Mammary epithelial cell (primary cell): ENCODE measurements at regions of chr11 and their contacts with region 1.

Region 1: DNA sequence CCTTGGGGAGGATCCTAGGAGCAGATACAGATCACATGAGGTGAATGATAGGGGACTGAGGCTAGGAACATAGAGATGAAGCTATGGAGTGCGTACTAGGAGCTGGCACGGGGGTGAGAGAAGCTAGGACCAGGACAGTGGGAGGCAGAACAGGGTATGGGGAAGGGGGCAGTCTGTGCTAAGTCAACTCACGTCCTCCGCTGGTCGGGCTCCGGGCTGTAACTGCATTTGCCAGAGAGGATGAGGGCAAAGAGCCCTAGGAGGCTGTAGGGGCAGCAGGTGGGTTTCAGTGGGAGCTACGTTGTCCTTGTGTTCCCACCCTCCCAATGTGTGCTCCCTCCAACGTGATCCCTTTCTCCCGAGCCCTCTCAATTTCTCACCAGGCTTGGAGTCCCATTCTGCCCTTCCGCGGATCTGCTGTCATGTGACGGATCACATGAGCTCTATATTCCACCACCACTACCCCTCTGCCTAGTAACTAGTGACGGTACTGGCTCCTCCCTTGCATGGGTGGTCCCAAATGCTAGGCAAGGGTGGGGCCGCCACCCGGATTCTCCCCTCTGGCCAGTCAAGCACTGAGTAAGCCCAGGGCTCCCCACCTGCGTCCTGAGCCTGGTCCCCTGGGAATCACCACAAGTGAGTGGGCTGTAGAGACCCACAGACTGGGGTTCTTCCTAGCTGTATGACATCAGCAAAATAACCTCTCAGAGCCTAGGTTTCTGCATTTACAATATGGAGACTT is at the start of gene TPP1:
- DNase-seq: peak; percentile 94
- H3K4me3 ChIP-seq: peak within 1 kb of the TSS; percentile 49 to 82 (median 65)
- H3K27ac ChIP-seq: peak within 1 kb of the TSS; percentile 78
- H3K4me1 ChIP-seq: peaks cover 25% of the 10 kb centered on the region
- H3K27me3 ChIP-seq: no peaks in the 10 kb centered on the region
- CTCF ChIP-seq: no peak
- total RNA-seq, gene TPP1: 59.2 to 73.9 TPM

Region 2: GRCh38 chr11:6234387-6235107 is 384.6 kb before region 1 on chr11 and contains the start of gene FHIP1B:
- CTCF ChIA-PET with region 1: no interaction called
- dilution Hi-C with region 1: no loop called
- in situ Hi-C with region 1: no loop called
- intact Hi-C with region 1: loop called (anchors 2 kb)
- DNase-seq: peak; percentile 100
- H3K4me3 ChIP-seq: peak within 1 kb of the TSS; percentile 86 to 98 (median 89)
- H3K27ac ChIP-seq: peak within 1 kb of the TSS; percentile 94
- H3K4me1 ChIP-seq: peaks cover 3% of the 10 kb centered on the region
- H3K27me3 ChIP-seq: no peaks in the 10 kb centered on the region
- CTCF ChIP-seq: no peak
- total RNA-seq, gene FHIP1B: 24.4 to 29.7 TPM

Region 3: GRCh38 chr11:6481012-6481923 is 137.9 kb before region 1 on chr11 and contains the starts of genes ARFIP2 and TIMM10B:
- CTCF ChIA-PET with region 1: no interaction called
- dilution Hi-C with region 1: no loop called
- in situ Hi-C with region 1: loop called in 1 of 2 experiments (anchors 10 kb)
- intact Hi-C with region 1: loop called (anchors 5 kb)
- DNase-seq: peak; percentile 97
- H3K4me3 ChIP-seq: peak within 1 kb of the TSS; percentile 66 to 74 (median 67)
- H3K27ac ChIP-seq: peak within 1 kb of the TSS; percentile 91
- H3K4me1 ChIP-seq: peaks cover 21% of the 10 kb centered on the region
- H3K27me3 ChIP-seq: no peaks in the 10 kb centered on the region
- CTCF ChIP-seq: no peak
- total RNA-seq, gene ARFIP2: 70.5 to 76.2 TPM
- total RNA-seq, gene TIMM10B: 36.0 to 42.7 TPM

Region 4: GRCh38 chr11:6667733-6668374 is 48.7 kb after region 1 on chr11:
- CTCF ChIA-PET with region 1: no interaction called
- dilution Hi-C with region 1: loop called (anchors 5 kb)
- in situ Hi-C with region 1: no loop called
- intact Hi-C with region 1: no loop called
- DNase-seq: peak; percentile 12
- H3K4me3 ChIP-seq: no peak overlapping the region
- H3K27ac ChIP-seq: no peak overlapping the region
- H3K4me1 ChIP-seq: no peaks in the 10 kb centered on the region
- H3K27me3 ChIP-seq: no peaks in the 10 kb centered on the region
- CTCF ChIP-seq: peak; percentile 59 to 61

Region 5: GRCh38 chr11:6682936-6683861 is 64.0 kb after region 1 on chr11 and contains the start of gene MRPL17:
- CTCF ChIA-PET with region 1: interaction called, 3 read pairs
- dilution Hi-C with region 1: no loop called
- in situ Hi-C with region 1: no loop called
- intact Hi-C with region 1: loop called (anchors 1 kb)
- DNase-seq: peak; percentile 98
- H3K4me3 ChIP-seq: peak within 1 kb of the TSS; percentile 72 to 98 (median 90)
- H3K27ac ChIP-seq: peak within 1 kb of the TSS; percentile 66
- H3K4me1 ChIP-seq: peaks cover 5% of the 10 kb centered on the region
- H3K27me3 ChIP-seq: no peaks in the 10 kb centered on the region
- CTCF ChIP-seq: peak; percentile 67 to 84
- total RNA-seq, gene MRPL17: 23.8 to 95.9 TPM

Region 6: DNA sequence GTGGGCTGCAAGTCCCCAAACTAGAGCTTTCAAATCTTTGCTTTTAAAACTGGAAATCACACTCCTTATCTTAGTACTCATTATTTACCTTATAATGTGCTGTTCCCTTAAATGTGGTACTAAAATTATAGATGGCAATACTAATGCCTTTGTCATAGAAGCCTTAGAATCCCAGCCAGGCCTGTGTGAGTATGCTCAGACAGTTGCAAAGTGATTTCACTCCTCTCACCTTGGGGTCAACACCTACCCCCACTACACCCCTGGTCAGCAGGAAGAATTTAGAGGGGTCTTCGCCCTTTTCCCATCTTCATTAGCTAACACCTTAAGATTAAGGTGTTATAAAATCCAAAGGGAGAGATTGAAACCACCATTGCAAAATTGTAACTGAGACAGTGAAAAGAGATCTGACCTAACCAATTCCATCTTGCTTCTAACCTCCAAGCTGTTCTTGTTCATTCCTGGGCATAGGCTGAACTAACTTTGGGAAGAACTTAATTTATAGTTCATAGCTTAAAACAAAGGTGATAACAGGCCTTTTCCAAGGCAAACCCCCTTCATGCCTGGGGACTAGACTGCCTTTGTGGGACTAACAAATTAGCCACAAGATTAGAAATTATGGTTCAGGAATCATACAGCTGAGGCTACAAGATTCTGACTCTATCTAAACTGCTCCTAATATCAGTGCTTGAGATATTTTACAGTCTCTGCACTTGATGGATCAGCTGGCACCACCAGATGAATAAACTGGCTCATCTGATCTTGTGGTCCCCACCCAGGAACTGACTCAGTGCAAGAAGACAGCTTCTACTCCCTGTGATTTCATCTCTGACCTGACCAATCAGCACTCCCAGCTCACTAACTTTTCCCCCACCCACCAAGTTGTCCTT is 74.4 kb after region 1 on chr11:
- CTCF ChIA-PET with region 1: no interaction called
- dilution Hi-C with region 1: no loop called
- in situ Hi-C with region 1: no loop called
- intact Hi-C with region 1: no loop called
- DNase-seq: peak; percentile 91
- H3K4me3 ChIP-seq: no peak overlapping the region
- H3K27ac ChIP-seq: peak overlapping the region; percentile 16
- H3K4me1 ChIP-seq: peaks cover 7% of the 10 kb centered on the region
- H3K27me3 ChIP-seq: no peaks in the 10 kb centered on the region
- CTCF ChIP-seq: no peak